ENCODE measurements at regions of chr14 and their contacts with region 1.

Region 1: GRCh38 chr14:91177073-91178034 is 63.5 kb downstream of the DGLUCY start:
- DNase-seq: peak; percentile 18
- H3K4me3 ChIP-seq: no peak overlapping the region
- H3K27me3 ChIP-seq: no peaks in the 10 kb centered on the region
- CTCF ChIP-seq: peak; percentile 82

Region 2: GRCh38 chr14:90903101-90903500 is 274.3 kb before region 1 on chr14:
- CTCF ChIA-PET with region 1: interaction called, 236 read pairs
- POLR2A ChIA-PET with region 1: no interaction called
- DNase-seq: no peak
- H3K4me3 ChIP-seq: no peak overlapping the region
- H3K27me3 ChIP-seq: no peaks in the 10 kb centered on the region
- CTCF ChIP-seq: peak; percentile 71

Region 3: GRCh38 chr14:91138511-91139359 is 38.6 kb before region 1 on chr14:
- CTCF ChIA-PET with region 1: interaction called, 38 read pairs
- POLR2A ChIA-PET with region 1: no interaction called
- DNase-seq: no peak
- H3K4me3 ChIP-seq: no peak overlapping the region
- H3K27me3 ChIP-seq: no peaks in the 10 kb centered on the region
- CTCF ChIP-seq: peak; percentile 52

Region 4: DNA sequence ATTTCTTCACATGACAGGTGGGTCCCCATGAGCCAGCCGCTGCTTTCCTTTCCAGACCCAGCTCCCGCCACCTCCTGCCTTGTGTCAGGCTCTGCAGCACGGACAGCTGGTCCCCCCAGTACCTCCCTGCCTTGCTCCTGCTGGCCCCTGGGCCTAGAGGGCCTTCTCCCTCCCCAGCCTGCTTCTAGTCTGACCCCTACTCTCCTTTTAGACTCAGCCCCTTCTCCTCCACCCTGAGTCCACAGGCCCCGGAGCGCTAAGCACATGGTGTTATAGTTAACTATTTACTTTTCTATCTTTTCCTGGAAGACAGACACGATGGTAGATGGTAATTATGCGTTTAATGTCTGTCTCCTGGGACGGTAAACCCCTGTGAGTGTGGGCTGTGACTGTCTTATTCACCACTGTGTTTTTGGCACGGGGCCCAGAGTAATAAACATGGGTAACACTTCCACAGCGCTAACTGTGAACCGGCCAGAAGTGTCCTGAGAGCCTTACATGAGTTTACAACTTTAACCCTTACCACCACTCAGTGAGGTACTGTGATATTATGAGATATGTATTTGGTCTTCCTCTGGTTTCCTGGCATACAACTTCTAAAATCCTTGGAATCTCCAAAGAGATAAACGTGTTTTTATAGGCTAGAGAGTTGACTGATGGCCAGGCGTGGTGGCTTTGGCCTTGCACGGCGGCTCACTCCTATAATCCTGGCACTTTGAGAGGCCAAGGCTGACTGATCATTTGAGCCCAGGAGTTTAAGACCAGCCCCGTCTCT is 22.3 kb before region 1 on chr14:
- CTCF ChIA-PET with region 1: interaction called, 16 read pairs
- POLR2A ChIA-PET with region 1: no interaction called
- DNase-seq: no peak
- H3K4me3 ChIP-seq: no peak overlapping the region
- H3K27me3 ChIP-seq: no peaks in the 10 kb centered on the region
- CTCF ChIP-seq: no peak

Region 5: GRCh38 chr14:91277546-91278382 is 100.4 kb after region 1 on chr14:
- CTCF ChIA-PET with region 1: interaction called, 344 read pairs
- POLR2A ChIA-PET with region 1: no interaction called
- DNase-seq: no peak
- H3K4me3 ChIP-seq: no peak overlapping the region
- H3K27me3 ChIP-seq: no peaks in the 10 kb centered on the region
- CTCF ChIP-seq: no peak

Region 6: GRCh38 chr14:91286530-91286937 is 109.2 kb after region 1 on chr14:
- CTCF ChIA-PET with region 1: interaction called, 344 read pairs
- POLR2A ChIA-PET with region 1: no interaction called
- DNase-seq: no peak
- H3K4me3 ChIP-seq: no peak overlapping the region
- H3K27me3 ChIP-seq: no peaks in the 10 kb centered on the region
- CTCF ChIP-seq: peak; percentile 85

Region 7: GRCh38 chr14:91614187-91614586 is 436.8 kb after region 1 on chr14:
- CTCF ChIA-PET with region 1: no interaction called
- POLR2A ChIA-PET with region 1: no interaction called
- DNase-seq: no peak
- H3K4me3 ChIP-seq: no peak overlapping the region
- H3K27me3 ChIP-seq: no peaks in the 10 kb centered on the region
- CTCF ChIP-seq: no peak

Measured in BJ (cell line).